Activated B cell treated with CpG ODN at 0.5 μM for 24 hours (primary cell): ENCODE measurements at regions of chr22 and their contacts with region 1.

Region 1: GRCh38 chr22:20283674-20284066 is 15.6 kb upstream of the RTN4R start:
- DNase-seq: no peak
- ATAC-seq: no peak
- H3K4me3 Mint-ChIP-seq: no peak overlapping the region
- H3K27ac Mint-ChIP-seq: no peak overlapping the region
- H3K4me1 Mint-ChIP-seq: peaks cover 9% of the 10 kb centered on the region
- H3K27me3 Mint-ChIP-seq: no peaks in the 10 kb centered on the region
- CTCF ChIP-seq: no peak

Region 2: DNA sequence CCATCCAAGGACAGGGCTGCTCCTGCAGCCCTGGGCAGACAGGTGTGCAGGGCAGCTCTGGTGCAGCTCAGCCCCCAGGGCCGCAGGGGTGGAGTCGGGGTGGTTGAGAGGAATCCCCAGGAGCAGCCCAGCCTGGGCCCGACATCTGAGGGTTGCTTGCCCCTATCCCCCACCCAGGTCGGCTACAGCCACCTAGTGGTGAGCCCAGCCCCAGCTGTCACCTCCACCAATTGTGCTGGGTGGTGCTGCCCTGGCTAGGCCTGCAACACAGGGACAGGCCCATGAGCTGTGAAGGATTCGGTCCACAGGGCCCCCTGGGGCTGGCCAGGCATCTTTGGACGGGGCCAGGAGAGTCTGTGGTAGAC is 45.2 kb before region 1 on chr22:
- CTCF ChIA-PET with region 1: no interaction called
- POLR2A ChIA-PET with region 1: no interaction called
- intact Hi-C with region 1: loop called (anchors 5 kb)
- DNase-seq: peak; percentile 39
- ATAC-seq: peak; percentile 85
- H3K4me3 Mint-ChIP-seq: no peak overlapping the region
- H3K27ac Mint-ChIP-seq: no peak overlapping the region
- H3K4me1 Mint-ChIP-seq: peaks cover 14% of the 10 kb centered on the region
- H3K27me3 Mint-ChIP-seq: no peaks in the 10 kb centered on the region
- CTCF ChIP-seq: no peak